GM12878 (cell line): ENCODE measurements at regions of chr1 and their contacts with region 1.

Region 1: DNA sequence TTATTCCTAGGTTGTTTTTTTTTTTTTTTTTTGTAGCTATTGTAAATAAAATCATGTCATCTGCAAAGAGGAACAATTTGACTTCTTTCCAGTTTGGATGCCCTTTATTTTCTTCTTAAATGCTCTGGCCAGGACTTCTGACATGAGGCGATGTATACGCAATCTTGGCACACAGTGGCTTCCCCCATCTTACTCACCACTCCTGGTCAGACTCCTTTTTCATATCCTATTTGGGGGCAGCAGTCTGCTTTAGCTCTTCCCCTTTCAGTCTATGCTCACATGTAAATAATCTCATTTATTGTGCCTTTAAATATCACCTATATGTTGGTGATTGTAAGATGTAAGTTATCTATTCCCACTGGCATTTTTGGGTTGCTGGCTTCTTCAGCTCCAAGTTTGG is 56.1 kb downstream of the SLAMF6 start:
- DNase-seq: no peak
- ATAC-seq: peak; percentile 73
- H3K4me3 ChIP-seq: no peak overlapping the region
- H3K27ac ChIP-seq: no peak overlapping the region; the same call in 1 of the 2 replicates
- H3K4me1 ChIP-seq: peaks cover 41% of the 10 kb centered on the region
- H3K27me3 ChIP-seq: no peaks in the 10 kb centered on the region
- CTCF ChIP-seq: no peak
- EP300 ChIP-seq: no peak
- POLR2A ChIP-seq: no peak
- RAD21 ChIP-seq: no peak

Region 2: DNA sequence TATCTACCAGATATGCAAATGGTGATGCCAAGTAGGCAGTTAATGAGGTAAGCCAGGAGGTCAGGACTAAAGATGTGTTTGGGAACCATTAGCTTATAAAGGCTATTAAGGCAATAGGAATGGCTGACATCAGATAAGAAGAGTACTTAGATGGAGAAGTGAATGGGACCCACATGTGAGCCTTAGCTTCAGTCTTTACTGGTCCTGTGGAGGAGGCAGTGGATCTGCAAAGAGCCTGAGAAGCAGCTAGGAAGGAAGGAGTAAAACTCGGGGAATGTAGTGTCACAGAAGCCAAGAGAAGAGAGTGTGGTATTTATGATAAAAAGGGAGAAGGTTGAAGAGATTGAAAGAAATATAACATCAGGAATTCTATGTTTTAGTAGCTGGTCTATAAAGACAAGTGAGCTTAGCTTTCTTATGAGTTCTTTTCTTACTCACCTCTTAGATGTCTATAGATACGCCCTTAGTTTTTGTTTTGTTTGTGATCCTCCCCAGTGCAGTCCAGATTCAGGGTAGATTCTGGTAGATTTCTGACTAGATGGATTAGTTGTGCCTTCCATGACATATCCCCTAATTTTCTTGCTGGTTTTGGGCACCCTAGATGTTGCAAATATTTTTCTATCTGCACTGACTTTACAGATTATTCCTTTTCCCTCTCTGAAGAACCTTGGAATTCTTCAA is 16.7 kb after region 1 on chr1:
- CTCF ChIA-PET with region 1: interaction called, 6 read pairs
- POLR2A ChIA-PET with region 1: interaction called, 9 read pairs
- RAD21 ChIA-PET with region 1: interaction called, 6 read pairs
- SMC1A ChIA-PET with region 1: interaction called, 19 read pairs
- in situ Hi-C with region 1: no loop called
- intact Hi-C with region 1: no loop called
- DNase-seq: no peak
- ATAC-seq: peak; percentile 30; the same call in 2 of the 3 replicates
- H3K4me3 ChIP-seq: no peak overlapping the region
- H3K27ac ChIP-seq: no peak overlapping the region
- H3K4me1 ChIP-seq: peaks cover 5% of the 10 kb centered on the region; the same call in 1 of the 2 replicates
- H3K27me3 ChIP-seq: no peaks in the 10 kb centered on the region
- CTCF ChIP-seq: no peak
- EP300 ChIP-seq: no peak
- POLR2A ChIP-seq: no peak
- RAD21 ChIP-seq: no peak